ENCODE measurements at regions of chr9 and their contacts with region 1.

Region 1: DNA sequence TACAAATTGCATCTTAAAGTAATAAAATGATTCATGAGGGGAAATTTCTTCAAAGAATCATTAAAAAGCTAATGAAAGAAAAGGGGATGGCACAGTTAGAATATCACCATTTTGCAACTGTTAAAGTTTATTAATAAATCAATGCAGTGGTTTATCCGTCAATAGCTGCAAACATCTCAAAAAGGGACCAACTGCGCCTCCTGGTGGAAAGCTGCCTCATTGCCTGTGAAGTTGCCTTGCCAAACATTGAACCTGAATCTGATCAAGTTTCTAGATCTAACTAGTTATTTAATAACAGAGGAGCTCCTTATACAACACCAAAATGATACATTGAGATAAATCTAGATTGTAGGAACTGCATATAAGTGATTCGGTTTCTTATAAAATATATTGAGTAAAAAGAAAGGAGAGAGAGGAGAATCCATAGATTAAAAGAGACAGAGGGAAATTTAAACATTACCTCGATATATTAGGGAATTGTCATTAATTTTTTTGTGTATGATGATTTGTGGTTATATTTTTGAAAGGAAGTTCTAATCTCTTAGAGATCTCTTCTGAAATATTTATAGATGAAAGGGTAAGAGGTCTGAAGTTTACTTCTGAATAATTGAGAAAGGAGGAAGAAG is 6.9 kb upstream of the NDUFB6 start:
- DNase-seq: peak; percentile 68 to 75 (median 72)
- H3K4me3 ChIP-seq: no peak overlapping the region
- H3K4me3 Mint-ChIP-seq: no peak overlapping the region
- H3K27ac ChIP-seq: no peak overlapping the region
- H3K27ac Mint-ChIP-seq: no peak overlapping the region
- H3K4me1 ChIP-seq: no peaks in the 10 kb centered on the region
- H3K4me1 Mint-ChIP-seq: peaks cover 0 to 5% (median 0%) of the 10 kb centered on the region in 4 donors
- H3K27me3 ChIP-seq: peaks cover 3% of the 10 kb centered on the region
- H3K27me3 Mint-ChIP-seq: peaks cover 7 to 11% of the 10 kb centered on the region in 2 donors

Region 2: GRCh38 chr9:32431940-32432555 is 147.8 kb before region 1 on chr9:
- CTCF ChIA-PET with region 1: interaction called, 11 read pairs
- POLR2A ChIA-PET with region 1: no interaction called
- intact Hi-C with region 1: no loop called
- DNase-seq: peak in 4 of 5 donors; percentile 9 to 15 (median 12)
- H3K4me3 ChIP-seq: no peak overlapping the region
- H3K4me3 Mint-ChIP-seq: no peak overlapping the region
- H3K27ac ChIP-seq: no peak overlapping the region
- H3K27ac Mint-ChIP-seq: no peak overlapping the region
- H3K4me1 ChIP-seq: no peaks in the 10 kb centered on the region
- H3K4me1 Mint-ChIP-seq: peaks cover 0 to 4% (median 2%) of the 10 kb centered on the region in 4 donors
- H3K27me3 ChIP-seq: no peaks in the 10 kb centered on the region
- H3K27me3 Mint-ChIP-seq: no peaks in the 10 kb centered on the region

Region 3: DNA sequence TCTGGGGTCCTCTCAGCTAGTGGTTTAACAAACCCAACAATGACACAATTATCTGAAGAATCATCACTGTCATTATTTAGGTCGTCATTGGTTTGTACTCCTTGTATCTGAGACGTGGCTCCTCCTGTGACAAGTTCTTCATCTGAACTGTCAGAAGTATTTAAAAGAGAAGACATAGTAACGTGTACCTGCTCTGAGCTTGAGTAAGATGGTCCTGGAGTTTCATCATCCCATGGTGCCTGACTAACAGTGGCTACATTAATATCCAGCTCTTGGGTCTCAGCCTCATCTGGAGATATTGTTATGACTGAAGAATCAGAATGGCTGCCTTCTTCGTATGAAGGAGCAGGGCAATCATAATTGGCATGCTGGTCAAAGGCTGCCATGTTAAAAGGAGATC is 36.8 kb before region 1 on chr9:
- CTCF ChIA-PET with region 1: interaction called, 72 read pairs
- POLR2A ChIA-PET with region 1: no interaction called
- intact Hi-C with region 1: no loop called
- DNase-seq: no peak
- H3K4me3 ChIP-seq: no peak overlapping the region
- H3K4me3 Mint-ChIP-seq: no peak overlapping the region
- H3K27ac ChIP-seq: no peak overlapping the region
- H3K27ac Mint-ChIP-seq: peak overlapping the region in 1 of 7 donors; percentile 5
- H3K4me1 ChIP-seq: peaks cover 11% of the 10 kb centered on the region
- H3K4me1 Mint-ChIP-seq: peaks cover 7 to 23% (median 17%) of the 10 kb centered on the region in 4 donors
- H3K27me3 ChIP-seq: no peaks in the 10 kb centered on the region
- H3K27me3 Mint-ChIP-seq: no peaks in the 10 kb centered on the region

Region 4: GRCh38 chr9:32566770-32567169 is 13.0 kb before region 1 on chr9:
- CTCF ChIA-PET with region 1: interaction called, 12 read pairs
- POLR2A ChIA-PET with region 1: interaction called, 3 read pairs
- intact Hi-C with region 1: no loop called
- DNase-seq: no peak
- H3K4me3 ChIP-seq: no peak overlapping the region
- H3K4me3 Mint-ChIP-seq: no peak overlapping the region
- H3K27ac ChIP-seq: no peak overlapping the region
- H3K27ac Mint-ChIP-seq: no peak overlapping the region
- H3K4me1 ChIP-seq: peaks cover 6% of the 10 kb centered on the region
- H3K4me1 Mint-ChIP-seq: peaks cover 14 to 24% (median 16%) of the 10 kb centered on the region in 4 donors
- H3K27me3 ChIP-seq: no peaks in the 10 kb centered on the region
- H3K27me3 Mint-ChIP-seq: no peaks in the 10 kb centered on the region

Region 5: DNA sequence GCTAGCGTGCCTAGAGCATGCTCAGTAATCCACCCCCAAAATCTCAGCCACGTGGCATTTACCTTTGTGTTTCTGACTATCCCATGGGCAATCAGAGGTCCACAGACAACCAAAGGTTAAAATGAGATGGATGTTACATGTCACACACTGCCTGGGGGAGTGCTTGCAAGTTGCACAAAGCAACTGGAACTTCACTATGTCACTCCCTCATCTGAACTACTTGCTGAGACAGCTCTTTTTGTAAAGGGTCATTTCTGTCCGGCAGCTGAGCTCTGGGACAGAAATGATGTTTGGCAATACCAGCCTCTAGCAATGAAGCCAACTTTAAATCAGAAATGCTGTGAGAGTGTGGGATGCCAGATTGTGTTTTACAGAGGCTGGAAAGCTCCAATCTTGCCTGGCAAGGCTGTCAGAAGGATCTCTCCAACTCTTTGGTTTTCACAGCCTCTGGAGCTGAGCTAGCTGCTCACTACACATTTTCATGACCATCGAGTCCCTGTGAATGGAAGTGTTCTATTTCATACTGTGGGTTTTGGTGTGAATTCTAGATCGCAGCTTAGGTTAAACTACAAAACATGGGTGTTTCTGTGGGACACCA is 137.2 kb after region 1 on chr9:
- CTCF ChIA-PET with region 1: no interaction called
- POLR2A ChIA-PET with region 1: no interaction called
- intact Hi-C with region 1: no loop called
- DNase-seq: no peak
- H3K4me3 ChIP-seq: no peak overlapping the region
- H3K4me3 Mint-ChIP-seq: no peak overlapping the region
- H3K27ac ChIP-seq: no peak overlapping the region
- H3K27ac Mint-ChIP-seq: no peak overlapping the region
- H3K4me1 ChIP-seq: no peaks in the 10 kb centered on the region
- H3K4me1 Mint-ChIP-seq: peaks cover 0 to 1% (median 0%) of the 10 kb centered on the region in 4 donors
- H3K27me3 ChIP-seq: no peaks in the 10 kb centered on the region
- H3K27me3 Mint-ChIP-seq: peaks cover 1 to 2% of the 10 kb centered on the region in 2 donors

Region 6: GRCh38 chr9:32928145-32928763 is 348.4 kb after region 1 on chr9:
- CTCF ChIA-PET with region 1: no interaction called
- POLR2A ChIA-PET with region 1: no interaction called
- intact Hi-C with region 1: no loop called
- DNase-seq: no peak
- H3K4me3 ChIP-seq: no peak overlapping the region
- H3K4me3 Mint-ChIP-seq: no peak overlapping the region
- H3K27ac ChIP-seq: no peak overlapping the region
- H3K27ac Mint-ChIP-seq: no peak overlapping the region
- H3K4me1 ChIP-seq: no peaks in the 10 kb centered on the region
- H3K4me1 Mint-ChIP-seq: no peaks in the 10 kb centered on the region
- H3K27me3 ChIP-seq: no peaks in the 10 kb centered on the region
- H3K27me3 Mint-ChIP-seq: peaks cover 0 to 2% of the 10 kb centered on the region in 2 donors

Region 7: DNA sequence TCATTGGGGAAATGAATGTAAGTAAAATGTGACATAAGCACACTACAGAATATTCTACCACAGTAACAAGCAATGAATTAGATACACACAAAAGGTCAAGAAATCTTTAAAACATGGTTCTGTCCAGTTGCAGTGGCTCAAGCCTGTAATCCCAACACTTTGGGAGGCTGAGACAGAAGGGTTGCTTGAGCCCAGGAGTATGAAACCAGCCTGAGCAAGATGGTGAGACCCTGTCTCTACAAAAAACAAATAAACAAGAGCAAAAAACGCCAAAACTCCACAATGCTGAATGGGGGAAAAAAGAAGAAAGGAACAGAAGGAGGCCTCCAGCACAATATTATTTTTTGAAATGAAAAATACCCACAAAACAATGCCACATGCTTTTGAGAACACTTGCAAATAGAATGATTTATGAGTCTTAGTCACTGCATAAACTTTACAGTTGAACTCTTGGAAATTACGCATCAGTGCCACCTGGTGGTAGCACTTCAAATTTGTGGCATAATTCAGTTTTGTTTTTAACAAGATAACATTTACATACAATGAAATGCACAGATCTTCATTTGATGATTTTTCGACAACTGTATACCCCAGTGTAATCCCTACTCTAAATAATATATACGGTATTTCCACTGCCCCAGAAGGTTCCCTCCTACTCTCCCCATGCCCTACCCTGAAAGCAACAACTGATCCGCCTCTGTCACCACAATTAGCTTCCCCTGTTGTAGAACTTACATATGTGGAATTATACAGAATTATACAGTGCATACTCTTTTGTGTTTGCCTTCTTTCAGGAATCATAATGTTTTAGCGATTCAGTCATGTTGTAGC is 645.7 kb after region 1 on chr9:
- CTCF ChIA-PET with region 1: interaction called, 3 read pairs
- POLR2A ChIA-PET with region 1: no interaction called
- intact Hi-C with region 1: loop called (anchors 10 kb)
- DNase-seq: peak; percentile 63 to 74 (median 69)
- H3K4me3 ChIP-seq: no peak overlapping the region
- H3K4me3 Mint-ChIP-seq: peak overlapping the region in 1 of 8 donors; percentile 16
- H3K27ac ChIP-seq: no peak overlapping the region
- H3K27ac Mint-ChIP-seq: no peak overlapping the region
- H3K4me1 ChIP-seq: peaks cover 9% of the 10 kb centered on the region
- H3K4me1 Mint-ChIP-seq: peaks cover 7 to 12% (median 8%) of the 10 kb centered on the region in 4 donors
- H3K27me3 ChIP-seq: no peaks in the 10 kb centered on the region
- H3K27me3 Mint-ChIP-seq: no peaks in the 10 kb centered on the region

Measured in CD4-positive, alpha-beta memory T cell (primary cell).